RWPE1 (cell line): ENCODE measurements at regions of chr20 and their contacts with region 1.

Region 1: GRCh38 chr20:58179432-58180099 is 48.9 kb downstream of the ANKRD60 start:
- DNase-seq: peak; percentile 82
- H3K27ac ChIP-seq: no peak overlapping the region
- CTCF ChIP-seq: peak; percentile 100

Region 2: GRCh38 chr20:57622579-57623377 is 556.8 kb before region 1 on chr20:
- CTCF ChIA-PET with region 1: interaction called, 13 read pairs
- POLR2A ChIA-PET with region 1: no interaction called
- DNase-seq: peak; percentile 99
- H3K27ac ChIP-seq: peak overlapping the region; percentile 52; the same call in 1 of the 2 replicates
- CTCF ChIP-seq: peak; percentile 99

Region 3: GRCh38 chr20:58048169-58048568 is 131.4 kb before region 1 on chr20:
- CTCF ChIA-PET with region 1: interaction called, 10 read pairs
- POLR2A ChIA-PET with region 1: no interaction called
- DNase-seq: peak; percentile 71
- H3K27ac ChIP-seq: no peak overlapping the region
- CTCF ChIP-seq: no peak

Region 4: DNA sequence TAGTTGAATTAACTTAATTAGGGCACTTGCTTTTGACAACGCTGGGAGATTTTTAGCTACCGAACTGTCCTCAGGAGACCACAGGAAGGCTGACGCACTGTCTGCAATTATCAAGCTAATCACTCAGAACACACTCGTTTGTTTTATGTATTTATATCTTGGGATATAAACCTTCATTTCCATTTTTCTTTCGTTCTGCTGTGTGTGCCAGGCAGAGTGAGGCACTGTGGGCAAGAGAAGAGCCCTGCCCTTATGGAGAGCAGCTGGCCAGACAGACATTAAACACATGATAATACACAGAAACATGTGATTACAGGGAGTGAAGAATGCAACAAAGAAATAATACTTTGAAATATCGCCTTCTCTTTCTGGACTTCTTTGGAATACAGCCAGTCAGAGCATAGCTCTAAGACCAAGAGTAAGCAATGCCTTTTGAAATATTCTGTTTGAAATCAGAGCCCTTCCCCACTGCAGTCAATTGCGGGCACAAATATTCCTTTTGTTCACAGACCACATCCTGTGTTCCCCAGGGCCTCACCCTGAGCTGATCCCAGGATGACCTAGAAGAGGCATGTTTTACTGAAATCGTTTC is 47.9 kb before region 1 on chr20:
- CTCF ChIA-PET with region 1: interaction called, 12 read pairs
- POLR2A ChIA-PET with region 1: no interaction called
- DNase-seq: peak; percentile 92
- H3K27ac ChIP-seq: peak overlapping the region; percentile 44; the same call in 1 of the 2 replicates
- CTCF ChIP-seq: no peak

Region 5: GRCh38 chr20:58169450-58169849 is 10.1 kb before region 1 on chr20:
- CTCF ChIA-PET with region 1: interaction called, 14 read pairs
- POLR2A ChIA-PET with region 1: no interaction called
- DNase-seq: no peak
- H3K27ac ChIP-seq: no peak overlapping the region
- CTCF ChIP-seq: no peak